ENCODE measurements at regions of chr11 and their contacts with region 1.

Region 1: DNA sequence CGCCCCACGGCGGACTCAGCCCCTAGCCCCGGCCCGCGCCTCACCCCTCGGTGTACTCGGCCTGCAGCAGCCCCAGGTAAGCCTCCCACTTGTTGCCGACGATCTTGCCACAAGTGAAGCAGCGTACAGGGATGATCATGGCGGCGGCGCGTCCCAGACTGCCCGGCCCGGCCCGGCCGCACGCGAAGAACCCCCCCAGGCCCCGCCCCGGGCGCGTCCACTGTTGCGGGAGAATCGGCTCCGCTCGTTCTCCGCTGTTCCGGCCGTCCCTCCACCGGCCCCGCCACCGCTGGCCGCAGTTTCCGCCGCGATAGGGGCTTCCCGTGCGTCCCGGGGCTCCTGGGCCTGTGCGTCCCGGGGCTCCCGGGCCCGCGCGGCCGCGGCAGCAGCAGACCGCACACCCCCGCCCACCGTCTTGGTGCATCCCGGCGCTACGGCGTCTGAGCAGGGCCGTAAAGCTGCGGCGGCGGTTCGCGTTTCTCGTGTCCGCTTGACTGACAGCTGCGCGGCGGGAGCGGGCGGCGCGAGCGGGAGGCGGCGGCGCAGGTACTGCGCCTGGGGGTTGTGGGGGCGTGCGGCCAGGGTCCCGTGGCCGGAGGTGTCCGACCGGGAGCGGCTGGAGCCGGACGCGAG is at the starts of genes POLR2L and TSPAN4:
- DNase-seq: peak; percentile 92
- ATAC-seq: peak; percentile 87
- H3K4me3 Mint-ChIP-seq: peak within 1 kb of the TSS; percentile 89
- H3K27ac Mint-ChIP-seq: peak within 1 kb of the TSS; percentile 83
- H3K4me1 Mint-ChIP-seq: peaks cover 35% of the 10 kb centered on the region
- H3K27me3 Mint-ChIP-seq: peaks cover 5% of the 10 kb centered on the region
- CTCF ChIP-seq: no peak
- total RNA-seq, gene POLR2L: 83.9 and 90.2 TPM in 2 replicates
- total RNA-seq, gene TSPAN4: 2.2 and 2.3 TPM in 2 replicates

Region 2: GRCh38 chr11:396948-397548 is 445.4 kb before region 1 on chr11:
- CTCF ChIA-PET with region 1: no interaction called
- POLR2A ChIA-PET with region 1: no interaction called
- intact Hi-C with region 1: no loop called
- DNase-seq: peak; percentile 56
- ATAC-seq: peak; percentile 93
- H3K4me3 Mint-ChIP-seq: peak overlapping the region; percentile 24
- H3K27ac Mint-ChIP-seq: no peak overlapping the region
- H3K4me1 Mint-ChIP-seq: no peaks in the 10 kb centered on the region
- H3K27me3 Mint-ChIP-seq: peaks cover 3% of the 10 kb centered on the region
- CTCF ChIP-seq: no peak

Region 3: GRCh38 chr11:809287-810039 is 33.0 kb before region 1 on chr11 and contains the start of gene RPLP2:
- CTCF ChIA-PET with region 1: no interaction called
- POLR2A ChIA-PET with region 1: interaction called, 17 read pairs
- intact Hi-C with region 1: loop called (anchors 1 kb)
- DNase-seq: peak; percentile 97
- ATAC-seq: peak; percentile 82
- H3K4me3 Mint-ChIP-seq: peak within 1 kb of the TSS; percentile 91
- H3K27ac Mint-ChIP-seq: peak within 1 kb of the TSS; percentile 98
- H3K4me1 Mint-ChIP-seq: peaks cover 37% of the 10 kb centered on the region
- H3K27me3 Mint-ChIP-seq: no peaks in the 10 kb centered on the region
- CTCF ChIP-seq: no peak
- total RNA-seq, gene RPLP2: 4,124 and 4,449 TPM in 2 replicates

Region 4: GRCh38 chr11:819129-819931 is 23.2 kb before region 1 on chr11:
- CTCF ChIA-PET with region 1: interaction called, 4 read pairs
- POLR2A ChIA-PET with region 1: interaction called, 45 read pairs
- intact Hi-C with region 1: loop called (anchors 1 kb)
- DNase-seq: peak; percentile 95
- ATAC-seq: peak; percentile 85
- H3K4me3 Mint-ChIP-seq: peak overlapping the region; percentile 85
- H3K27ac Mint-ChIP-seq: no peak overlapping the region
- H3K4me1 Mint-ChIP-seq: peaks cover 14% of the 10 kb centered on the region
- H3K27me3 Mint-ChIP-seq: no peaks in the 10 kb centered on the region
- CTCF ChIP-seq: no peak

Region 5: GRCh38 chr11:910589-911195 is 68.2 kb after region 1 on chr11 and contains the start of gene CHID1:
- CTCF ChIA-PET with region 1: no interaction called
- POLR2A ChIA-PET with region 1: interaction called, 5 read pairs
- intact Hi-C with region 1: loop called (anchors 2 kb)
- DNase-seq: peak; percentile 91
- ATAC-seq: peak; percentile 95
- H3K4me3 Mint-ChIP-seq: peak within 1 kb of the TSS; percentile 90
- H3K27ac Mint-ChIP-seq: peak within 1 kb of the TSS; percentile 72
- H3K4me1 Mint-ChIP-seq: peaks cover 31% of the 10 kb centered on the region
- H3K27me3 Mint-ChIP-seq: no peaks in the 10 kb centered on the region
- CTCF ChIP-seq: no peak
- total RNA-seq, gene CHID1: 43.9 and 45.7 TPM in 2 replicates

Region 6: DNA sequence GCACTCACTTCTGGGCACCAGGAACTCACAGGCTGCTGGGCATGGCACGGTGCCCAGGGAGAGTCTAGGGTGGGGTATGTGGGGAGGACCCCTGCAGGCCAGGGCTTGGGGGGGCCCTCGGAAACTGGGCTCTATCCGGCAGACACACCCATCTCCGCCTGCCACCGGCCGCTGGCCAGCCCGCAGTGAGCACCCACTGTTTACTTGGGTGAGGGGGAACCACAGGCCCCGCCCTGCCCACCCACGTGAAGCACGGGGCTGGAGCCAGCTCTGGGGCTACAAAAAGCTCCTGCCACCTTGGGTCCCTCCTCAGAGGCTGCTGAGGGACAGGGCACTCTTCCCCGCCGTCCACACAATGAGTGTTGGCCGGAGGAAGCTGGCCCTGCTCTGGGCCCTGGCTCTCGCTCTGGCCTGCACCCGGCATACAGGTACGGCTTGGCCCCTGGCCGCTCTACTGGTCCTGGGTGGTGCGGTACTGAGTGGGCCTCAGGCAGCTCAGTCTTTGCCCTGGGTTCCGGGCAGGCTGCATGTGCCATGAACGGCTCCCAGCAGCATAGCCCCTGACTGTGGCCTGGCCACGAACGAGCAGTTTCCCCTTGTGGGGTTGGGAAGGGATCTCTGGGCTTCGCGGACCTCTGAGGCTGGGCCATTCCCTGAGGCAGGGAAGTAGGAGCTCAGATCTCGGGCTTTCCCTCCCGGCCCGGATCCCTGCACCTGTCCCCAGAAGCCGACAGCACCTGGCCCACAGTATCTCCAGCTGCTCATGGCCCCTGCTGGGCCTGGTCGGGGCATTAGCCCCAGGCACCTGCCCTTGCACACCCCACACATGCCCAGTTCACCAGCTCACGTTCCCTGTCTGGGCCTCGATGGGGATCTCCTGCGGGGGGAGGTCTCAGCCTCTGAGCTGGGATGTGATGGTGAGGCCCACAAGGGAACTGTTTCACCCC is 315.4 kb after region 1 on chr11 and contains the start of gene MUC5AC:
- CTCF ChIA-PET with region 1: no interaction called
- POLR2A ChIA-PET with region 1: no interaction called
- intact Hi-C with region 1: no loop called
- DNase-seq: peak; percentile 6
- ATAC-seq: no peak
- H3K4me3 Mint-ChIP-seq: no peak within 1 kb of the TSS
- H3K27ac Mint-ChIP-seq: no peak within 1 kb of the TSS
- H3K4me1 Mint-ChIP-seq: no peaks in the 10 kb centered on the region
- H3K27me3 Mint-ChIP-seq: no peaks in the 10 kb centered on the region
- CTCF ChIP-seq: no peak
- total RNA-seq, gene MUC5AC: not detected in 2 replicates

Region 7: GRCh38 chr11:1546536-1547400 is 704.3 kb after region 1 on chr11:
- CTCF ChIA-PET with region 1: no interaction called
- POLR2A ChIA-PET with region 1: no interaction called
- intact Hi-C with region 1: no loop called
- DNase-seq: peak; percentile 50
- ATAC-seq: peak; percentile 67
- H3K4me3 Mint-ChIP-seq: peak overlapping the region; percentile 19
- H3K27ac Mint-ChIP-seq: no peak overlapping the region
- H3K4me1 Mint-ChIP-seq: peaks cover 13% of the 10 kb centered on the region
- H3K27me3 Mint-ChIP-seq: peaks cover 28% of the 10 kb centered on the region
- CTCF ChIP-seq: no peak

Measured in activated B cell treated with CpG ODN at 0.5 μM for 24 hours (primary cell).